SK-N-SH (cell line): ENCODE measurements at regions of chr17 and their contacts with region 1.

Region 1: GRCh38 chr17:76278952-76279741 is 14.0 kb downstream of the UBALD2 start:
- DNase-seq: peak; percentile 99
- H3K4me3 ChIP-seq: no peak overlapping the region; a peak in 1 of 4 replicates
- H3K27ac ChIP-seq: no peak overlapping the region
- H3K4me1 ChIP-seq: peaks cover 5 to 10% of the 10 kb centered on the region in 2 experiments; a peak in 1 of 4 replicates
- H3K27me3 ChIP-seq: no peaks in the 10 kb centered on the region
- CTCF ChIP-seq: peak; percentile 99
- EP300 ChIP-seq: no peak
- RAD21 ChIP-seq: peak; percentile 97

Region 2: DNA sequence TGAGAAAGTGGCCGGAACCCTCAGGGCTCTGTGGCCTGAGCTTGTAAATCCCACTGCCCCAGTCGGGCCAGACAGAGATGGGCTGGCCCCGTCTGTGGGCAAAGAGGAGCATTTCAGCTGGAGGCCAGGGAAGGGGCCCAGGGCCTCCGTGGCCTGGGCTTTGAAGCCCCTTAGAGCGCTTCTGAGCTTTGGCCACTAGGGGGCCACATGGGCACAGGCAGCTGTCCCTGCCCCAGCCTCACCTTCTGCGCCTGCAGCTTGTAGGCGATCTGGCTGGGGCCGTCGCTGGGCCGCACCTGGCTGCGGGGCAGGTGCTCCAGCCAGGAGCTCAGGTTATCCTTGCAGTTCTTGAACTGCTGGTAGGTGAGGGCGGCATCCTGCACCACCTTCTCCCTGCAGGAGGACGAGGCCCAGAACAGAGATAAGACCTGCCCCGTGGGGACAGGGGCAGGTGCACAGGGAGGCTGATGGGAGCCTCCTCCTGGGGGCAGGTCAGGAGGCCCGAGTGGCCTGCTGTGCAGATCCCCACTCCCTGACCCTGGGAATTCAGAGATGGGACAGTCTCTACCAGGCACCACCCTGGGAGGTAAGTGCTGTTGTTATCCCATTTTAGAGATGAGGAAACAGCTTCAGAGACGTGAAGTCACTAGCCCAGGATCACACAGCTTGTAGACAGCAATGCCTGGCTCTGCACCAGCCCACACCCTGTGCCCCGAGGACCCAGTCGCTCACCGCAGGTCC is 264.8 kb before region 1 on chr17:
- CTCF ChIA-PET with region 1: interaction called, 76 read pairs
- POLR2A ChIA-PET with region 1: no interaction called
- DNase-seq: peak; percentile 97
- H3K4me3 ChIP-seq: no peak overlapping the region
- H3K27ac ChIP-seq: no peak overlapping the region
- H3K4me1 ChIP-seq: peaks cover 10 to 13% of the 10 kb centered on the region in 2 experiments; a peak in 2 of 4 replicates
- H3K27me3 ChIP-seq: no peaks in the 10 kb centered on the region
- CTCF ChIP-seq: peak; percentile 99
- EP300 ChIP-seq: no peak
- RAD21 ChIP-seq: peak; percentile 95

Region 3: DNA sequence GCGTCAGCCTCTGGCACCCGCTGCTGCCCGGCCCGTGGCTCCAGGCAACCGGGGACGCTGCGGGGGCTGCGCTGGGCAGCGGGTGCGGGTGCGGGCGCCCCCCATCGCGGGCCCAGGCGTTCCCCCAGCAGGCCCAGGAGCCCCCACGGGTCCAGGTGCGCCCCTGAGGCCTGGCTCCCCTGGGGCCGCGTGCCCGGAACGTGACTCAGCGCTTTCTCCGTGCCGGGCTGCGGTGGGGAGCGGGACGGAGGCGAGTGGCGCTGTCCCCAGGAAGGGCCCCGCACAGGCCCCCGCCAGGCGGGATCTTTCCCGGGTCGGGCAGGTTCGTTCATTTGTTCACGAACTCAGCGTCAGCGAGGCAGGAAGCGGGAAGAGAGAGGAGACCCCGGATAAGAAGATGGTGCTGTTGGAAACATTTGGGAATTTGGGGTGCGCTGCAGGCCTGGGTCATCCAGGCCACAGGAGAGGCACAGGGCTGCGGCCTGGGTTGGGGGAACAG is 157.2 kb before region 1 on chr17:
- CTCF ChIA-PET with region 1: interaction called, 332 read pairs
- POLR2A ChIA-PET with region 1: interaction called, 3 read pairs
- DNase-seq: no peak
- H3K4me3 ChIP-seq: no peak overlapping the region
- H3K27ac ChIP-seq: no peak overlapping the region
- H3K4me1 ChIP-seq: no peaks in the 10 kb centered on the region; a peak in 1 of 4 replicates
- H3K27me3 ChIP-seq: no peaks in the 10 kb centered on the region
- CTCF ChIP-seq: no peak
- EP300 ChIP-seq: no peak
- RAD21 ChIP-seq: no peak

Region 4: DNA sequence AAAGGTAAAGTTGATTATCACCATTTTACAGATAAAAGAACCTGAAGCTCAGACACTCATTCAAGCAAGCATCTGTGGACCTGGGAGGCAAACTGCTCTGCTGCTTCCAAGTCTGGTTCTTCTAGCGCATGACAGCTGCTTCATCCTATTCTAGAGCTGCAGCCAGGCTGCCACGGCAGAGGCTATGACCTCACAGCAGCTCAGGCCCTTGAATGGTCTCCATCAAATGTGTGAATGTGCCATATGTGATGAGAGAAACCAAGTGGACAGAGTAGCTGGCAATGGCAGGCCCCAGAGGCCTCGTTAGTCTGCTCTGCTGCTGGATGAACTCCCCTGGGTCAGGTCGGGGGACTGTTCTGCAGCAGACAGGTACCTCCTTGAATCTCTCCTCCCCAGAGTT is 107.4 kb before region 1 on chr17:
- CTCF ChIA-PET with region 1: interaction called, 75 read pairs
- POLR2A ChIA-PET with region 1: no interaction called
- DNase-seq: no peak
- H3K4me3 ChIP-seq: no peak overlapping the region
- H3K27ac ChIP-seq: no peak overlapping the region
- H3K4me1 ChIP-seq: peaks cover 0 to 3% of the 10 kb centered on the region in 2 experiments; a peak in 1 of 4 replicates
- H3K27me3 ChIP-seq: no peaks in the 10 kb centered on the region
- CTCF ChIP-seq: no peak
- EP300 ChIP-seq: no peak
- RAD21 ChIP-seq: no peak

Region 5: GRCh38 chr17:76240461-76241203 is 38.5 kb before region 1 on chr17 and contains the start of gene RNF157:
- CTCF ChIA-PET with region 1: interaction called, 55 read pairs
- POLR2A ChIA-PET with region 1: no interaction called
- DNase-seq: peak; percentile 97
- H3K4me3 ChIP-seq: peak within 1 kb of the TSS; percentile 62 to 81
- H3K27ac ChIP-seq: peak within 1 kb of the TSS in 1 of 2 experiments; percentile 40; a peak in 1 of 4 replicates
- H3K4me1 ChIP-seq: peaks cover 0 to 15% of the 10 kb centered on the region in 2 experiments; a peak in 1 of 4 replicates
- H3K27me3 ChIP-seq: no peaks in the 10 kb centered on the region
- CTCF ChIP-seq: no peak
- EP300 ChIP-seq: no peak
- RAD21 ChIP-seq: no peak
- polyA plus RNA-seq, gene RNF157: 5.2 TPM in 2 replicates

Region 6: GRCh38 chr17:76353599-76354316 is 74.6 kb after region 1 on chr17 and contains the start of gene PRPSAP1:
- CTCF ChIA-PET with region 1: interaction called, 11 read pairs
- POLR2A ChIA-PET with region 1: no interaction called
- DNase-seq: peak; percentile 97
- H3K4me3 ChIP-seq: peak within 1 kb of the TSS; percentile 65 to 87
- H3K27ac ChIP-seq: peak within 1 kb of the TSS; percentile 83 to 90
- H3K4me1 ChIP-seq: peaks cover 7 to 10% of the 10 kb centered on the region in 2 experiments; a peak in 2 of 4 replicates
- H3K27me3 ChIP-seq: no peaks in the 10 kb centered on the region
- CTCF ChIP-seq: peak; percentile 21
- EP300 ChIP-seq: 0 out of 4 replicates have a peak, but pooled peaks of 1 of the 2 experiments have one; percentile 19
- RAD21 ChIP-seq: no peak
- polyA plus RNA-seq, gene PRPSAP1: 118 and 125 TPM in 2 replicates

Region 7: GRCh38 chr17:76481071-76481655 is 202.0 kb after region 1 on chr17:
- CTCF ChIA-PET with region 1: no interaction called
- POLR2A ChIA-PET with region 1: no interaction called
- DNase-seq: no peak
- H3K4me3 ChIP-seq: no peak overlapping the region
- H3K27ac ChIP-seq: no peak overlapping the region
- H3K4me1 ChIP-seq: no peaks in the 10 kb centered on the region
- H3K27me3 ChIP-seq: no peaks in the 10 kb centered on the region
- CTCF ChIP-seq: no peak
- EP300 ChIP-seq: no peak
- RAD21 ChIP-seq: no peak